ENCODE measurements at regions of chr1 and their contacts with region 1.

Region 1: GRCh38 chr1:36099681-36100341 is 11.1 kb downstream of the ADPRS start:
- H3K4me3 Mint-ChIP-seq: no peak overlapping the region
- H3K27ac Mint-ChIP-seq: no peak overlapping the region
- H3K4me1 Mint-ChIP-seq: peaks cover 37% of the 10 kb centered on the region
- H3K27me3 Mint-ChIP-seq: no peaks in the 10 kb centered on the region

Region 2: DNA sequence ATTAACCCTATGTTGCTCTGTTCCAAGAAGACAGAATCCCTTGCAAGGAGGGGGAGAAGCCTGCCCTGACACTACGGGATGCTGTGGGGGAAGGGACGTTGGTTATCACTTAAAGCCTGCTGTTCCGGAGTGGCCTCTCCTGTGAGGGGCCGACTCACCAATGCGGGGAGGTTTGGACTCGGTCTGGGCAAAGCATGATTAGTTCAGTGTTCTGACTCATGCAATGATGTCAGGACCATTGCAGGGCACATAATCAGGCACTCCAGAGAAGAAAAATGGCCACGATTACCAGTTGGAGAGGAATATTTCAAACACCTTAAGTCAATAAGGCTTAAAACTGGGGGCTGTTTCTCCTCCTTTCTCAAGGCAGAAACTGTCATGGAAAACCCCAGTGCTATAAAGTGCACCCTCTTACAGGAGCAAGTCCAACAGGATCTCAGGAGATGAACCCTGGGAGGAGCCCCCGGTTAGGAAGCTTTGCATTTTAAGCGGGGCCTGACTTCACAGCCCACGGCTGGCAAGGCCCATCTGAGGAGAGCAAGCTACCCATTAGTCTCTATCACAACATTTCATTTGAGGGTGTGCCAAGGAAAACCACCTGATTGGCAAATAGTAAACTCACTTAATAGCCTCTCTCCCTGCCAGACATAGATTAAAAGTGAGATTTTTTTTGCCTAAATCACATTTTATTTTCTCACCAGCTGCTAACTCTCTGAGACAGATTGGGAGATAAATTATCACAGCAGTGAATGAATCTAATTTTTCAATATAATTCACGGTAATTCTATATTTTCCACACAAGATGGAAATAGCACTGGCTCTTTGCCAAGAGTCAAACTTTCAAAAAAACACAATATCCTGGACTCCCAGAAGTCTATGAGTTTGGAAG is 1720.6 kb before region 1 on chr1:
- intact Hi-C with region 1: no loop called
- H3K4me3 Mint-ChIP-seq: no peak overlapping the region
- H3K27ac Mint-ChIP-seq: no peak overlapping the region
- H3K4me1 Mint-ChIP-seq: no peaks in the 10 kb centered on the region
- H3K27me3 Mint-ChIP-seq: peaks cover 5% of the 10 kb centered on the region

Region 3: GRCh38 chr1:36134505-36135329 is 34.9 kb after region 1 on chr1:
- intact Hi-C with region 1: loop called (anchors 2 kb)
- H3K4me3 Mint-ChIP-seq: no peak overlapping the region
- H3K27ac Mint-ChIP-seq: no peak overlapping the region
- H3K4me1 Mint-ChIP-seq: peaks cover 21% of the 10 kb centered on the region
- H3K27me3 Mint-ChIP-seq: no peaks in the 10 kb centered on the region

Region 4: DNA sequence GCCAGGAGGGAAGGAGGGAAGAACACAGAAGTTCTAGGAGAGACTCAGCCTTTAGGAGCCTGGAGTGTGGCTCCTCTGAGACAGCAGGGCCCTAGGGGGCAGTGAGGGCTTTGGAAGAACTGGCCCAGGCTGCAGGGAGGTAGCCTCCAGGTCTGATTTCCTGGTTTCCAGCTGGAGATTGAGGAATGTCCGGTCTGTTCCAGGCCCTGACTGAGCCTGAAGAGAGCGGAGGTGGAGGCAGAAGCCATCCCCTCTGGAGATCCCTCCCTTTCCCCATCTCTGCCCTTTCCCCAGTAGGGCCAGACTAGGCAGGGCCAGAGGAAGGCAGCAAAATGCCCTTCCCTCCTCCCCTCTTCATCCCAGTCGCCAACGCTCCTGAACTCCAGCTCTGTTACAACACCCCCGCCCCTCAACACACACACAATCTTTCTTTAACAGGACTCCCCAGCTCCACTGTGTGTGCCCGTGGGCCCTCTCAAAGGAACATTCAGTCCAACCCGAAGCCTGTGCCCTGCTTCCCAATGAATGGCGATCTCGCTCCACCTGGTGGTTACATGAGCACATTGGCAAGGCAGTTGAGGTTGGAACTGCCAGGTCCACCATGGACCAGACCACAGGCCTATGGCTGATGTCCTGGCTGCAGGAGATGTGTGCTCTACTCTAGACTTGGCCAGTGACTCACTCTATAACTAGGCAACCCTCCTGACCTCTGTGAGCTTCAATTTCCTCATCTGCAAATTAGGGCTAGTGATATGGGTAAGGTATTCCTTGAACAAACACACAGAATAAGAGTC is 88.2 kb after region 1 on chr1:
- intact Hi-C with region 1: loop called (anchors 2 kb)
- H3K4me3 Mint-ChIP-seq: no peak overlapping the region
- H3K27ac Mint-ChIP-seq: peak overlapping the region; percentile 83
- H3K4me1 Mint-ChIP-seq: peaks cover 17% of the 10 kb centered on the region
- H3K27me3 Mint-ChIP-seq: no peaks in the 10 kb centered on the region

Region 5: DNA sequence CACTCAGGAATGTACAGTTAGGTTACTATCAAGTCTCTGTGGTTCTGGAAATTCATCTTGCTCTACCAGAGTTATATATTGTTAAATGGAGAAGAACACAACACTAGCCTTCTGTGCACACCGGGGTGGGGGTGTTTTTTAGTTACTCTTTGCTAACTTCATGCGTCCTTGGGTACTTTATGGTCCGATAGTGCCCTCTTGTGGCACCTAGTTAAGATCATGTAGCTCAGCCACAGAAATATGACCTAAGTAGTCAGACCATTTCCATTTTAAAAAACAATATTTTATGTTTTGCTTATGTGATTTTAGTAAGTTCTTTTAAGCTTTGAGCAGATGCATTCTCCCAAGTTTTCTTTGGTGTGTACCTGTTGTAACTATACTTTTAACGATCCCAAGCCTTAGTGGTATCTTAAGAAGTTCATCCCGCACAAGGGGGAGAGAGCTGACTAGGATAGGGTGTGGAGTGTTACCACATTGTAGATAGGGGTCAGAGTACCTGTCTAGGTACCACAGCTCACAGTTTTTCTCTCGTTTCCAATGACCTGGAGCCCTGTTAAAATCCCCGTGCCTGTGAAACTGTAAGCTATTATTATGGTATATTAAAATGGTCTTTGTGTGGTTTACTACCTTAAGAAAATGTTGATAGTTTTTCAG is 185.8 kb after region 1 on chr1:
- intact Hi-C with region 1: loop called (anchors 5 kb)
- H3K4me3 Mint-ChIP-seq: no peak overlapping the region
- H3K27ac Mint-ChIP-seq: no peak overlapping the region
- H3K4me1 Mint-ChIP-seq: no peaks in the 10 kb centered on the region
- H3K27me3 Mint-ChIP-seq: no peaks in the 10 kb centered on the region

Measured in dendritic cell treated with granulocyte-macrophage colony-stimulating factor and Interleukin-4, amounts not matched to agents 40 ng/mL and 50 ng/mL, for 4 days (primary cell).